ENCODE measurements at regions of chr20 and their contacts with region 1.

Region 1: GRCh38 chr20:37758332-37758731 is 64.5 kb downstream of the CTNNBL1 start:
- DNase-seq: no peak

Region 2: GRCh38 chr20:37901654-37902503 is 143.5 kb after region 1 on chr20:
- intact Hi-C with region 1: loop called (anchors 5 kb)
- DNase-seq: no peak

Measured in cardiac septum (tissue), 1 donor.